B cell (primary cell): ENCODE measurements at regions of chr1 and their contacts with region 1.

Region 1: DNA sequence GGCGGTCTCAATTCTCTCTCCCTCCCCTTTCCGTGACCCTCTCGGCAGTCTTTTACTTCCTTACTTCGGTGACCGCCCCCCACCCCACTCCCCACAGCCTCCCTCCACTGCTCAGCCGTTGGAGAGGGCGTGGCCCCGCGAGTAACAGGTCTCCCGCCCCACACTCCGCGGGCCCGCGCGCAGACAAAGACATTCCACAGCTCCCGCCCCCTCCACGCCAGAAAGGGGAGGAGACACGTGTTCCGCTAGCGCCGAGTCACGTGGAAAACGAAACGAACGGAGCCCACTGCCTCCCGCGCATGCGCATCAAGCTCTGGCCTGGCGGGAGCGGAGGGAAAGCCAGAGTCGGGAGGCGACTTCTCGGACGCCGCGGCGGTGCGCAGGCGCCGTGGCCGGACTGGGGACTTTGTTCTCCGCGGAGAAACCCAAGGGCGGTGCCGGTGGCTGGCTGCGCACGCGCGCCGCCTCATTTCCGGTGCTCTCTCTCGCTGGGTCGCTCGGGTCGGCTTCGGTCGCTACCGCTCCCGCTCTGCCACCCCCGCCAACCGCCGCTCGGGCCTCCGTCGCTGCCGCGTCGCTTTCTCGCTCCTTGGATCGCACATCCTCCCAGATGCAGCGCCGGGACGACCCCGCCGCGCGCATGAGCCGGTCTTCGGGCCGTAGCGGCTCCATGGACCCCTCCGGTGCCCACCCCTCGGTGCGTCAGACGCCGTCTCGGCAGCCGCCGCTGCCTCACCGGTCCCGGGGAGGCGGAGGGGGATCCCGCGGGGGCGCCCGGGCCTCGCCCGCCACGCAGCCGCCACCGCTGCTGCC is at the start of gene KHDRBS1:
- DNase-seq: peak; percentile 99
- ATAC-seq: peak; percentile 86
- H3K4me3 ChIP-seq: peak within 1 kb of the TSS; percentile 60 to 96 (median 85)
- H3K4me3 Mint-ChIP-seq: peak within 1 kb of the TSS; percentile 99
- H3K27ac ChIP-seq: peak within 1 kb of the TSS; percentile 89 to 96
- H3K27ac Mint-ChIP-seq: peak within 1 kb of the TSS; percentile 99
- H3K4me1 ChIP-seq: peaks cover 20 to 33% of the 10 kb centered on the region in 2 donors
- H3K4me1 Mint-ChIP-seq: peaks cover 31% of the 10 kb centered on the region
- H3K27me3 ChIP-seq: no peaks in the 10 kb centered on the region
- H3K27me3 Mint-ChIP-seq: no peaks in the 10 kb centered on the region
- CTCF ChIP-seq: no peak
- total RNA-seq, gene KHDRBS1: 99.0 and 101 TPM in 2 replicates

Region 2: DNA sequence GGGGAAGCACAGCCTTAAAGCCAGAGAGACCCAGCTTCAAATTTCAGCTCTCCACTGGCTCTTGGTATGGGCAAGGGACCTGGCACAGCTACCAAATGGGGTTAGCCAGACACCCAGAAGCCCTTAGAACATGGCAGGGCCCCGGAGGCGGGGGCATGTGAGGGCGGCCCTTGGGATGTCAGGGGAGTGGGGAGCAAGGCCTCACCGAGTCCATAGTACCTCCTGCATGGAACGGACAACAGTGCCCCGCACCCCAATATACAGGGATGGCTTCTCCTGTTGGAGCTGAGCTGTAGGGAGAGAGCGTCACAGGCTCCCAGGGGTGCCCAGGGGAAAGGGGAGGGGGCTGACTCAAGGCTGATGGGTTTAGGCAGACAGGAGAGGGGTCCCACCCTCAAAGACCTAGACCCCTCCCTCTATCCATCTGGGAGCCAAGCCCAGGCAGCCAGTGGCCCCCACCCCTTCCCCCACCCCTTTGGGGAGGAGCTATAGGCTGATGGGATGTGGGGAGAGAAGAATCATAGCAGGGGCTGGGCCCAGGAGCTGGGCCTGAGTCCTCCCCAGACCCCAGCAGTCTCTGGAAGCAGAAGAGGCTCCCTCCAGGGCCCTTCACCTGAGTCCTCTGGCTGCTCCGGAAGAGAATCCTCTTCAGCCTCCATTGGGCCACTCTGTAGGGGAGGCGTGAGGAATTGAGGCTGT is 214.2 kb before region 1 on chr1:
- CTCF ChIA-PET with region 1: no interaction called
- POLR2A ChIA-PET with region 1: interaction called, 12 read pairs
- intact Hi-C with region 1: no loop called
- DNase-seq: no peak
- ATAC-seq: no peak
- H3K4me3 ChIP-seq: no peak overlapping the region
- H3K4me3 Mint-ChIP-seq: no peak overlapping the region
- H3K27ac ChIP-seq: no peak overlapping the region
- H3K27ac Mint-ChIP-seq: no peak overlapping the region
- H3K4me1 ChIP-seq: peaks cover 9% of the 10 kb centered on the region in 2 donors
- H3K4me1 Mint-ChIP-seq: peaks cover 14% of the 10 kb centered on the region
- H3K27me3 ChIP-seq: peaks cover 0 to 13% (median 3%) of the 10 kb centered on the region in 4 experiments
- H3K27me3 Mint-ChIP-seq: peaks cover 23% of the 10 kb centered on the region
- CTCF ChIP-seq: no peak

Region 3: GRCh38 chr1:31938174-31938950 is 75.2 kb before region 1 on chr1 and contains the start of gene PTP4A2:
- CTCF ChIA-PET with region 1: no interaction called
- POLR2A ChIA-PET with region 1: interaction called, 3 read pairs
- intact Hi-C with region 1: loop called (anchors 1 kb)
- DNase-seq: peak; percentile 95
- ATAC-seq: peak; percentile 82
- H3K4me3 ChIP-seq: peak within 1 kb of the TSS; percentile 59 to 97 (median 78)
- H3K4me3 Mint-ChIP-seq: peak within 1 kb of the TSS; percentile 91
- H3K27ac ChIP-seq: peak within 1 kb of the TSS; percentile 78 to 86
- H3K27ac Mint-ChIP-seq: peak within 1 kb of the TSS; percentile 95
- H3K4me1 ChIP-seq: peaks cover 73 to 76% of the 10 kb centered on the region in 2 donors
- H3K4me1 Mint-ChIP-seq: peaks cover 67% of the 10 kb centered on the region
- H3K27me3 ChIP-seq: no peaks in the 10 kb centered on the region
- H3K27me3 Mint-ChIP-seq: no peaks in the 10 kb centered on the region
- CTCF ChIP-seq: peak; percentile 63
- total RNA-seq, gene PTP4A2: 184 and 193 TPM in 2 replicates

Region 4: DNA sequence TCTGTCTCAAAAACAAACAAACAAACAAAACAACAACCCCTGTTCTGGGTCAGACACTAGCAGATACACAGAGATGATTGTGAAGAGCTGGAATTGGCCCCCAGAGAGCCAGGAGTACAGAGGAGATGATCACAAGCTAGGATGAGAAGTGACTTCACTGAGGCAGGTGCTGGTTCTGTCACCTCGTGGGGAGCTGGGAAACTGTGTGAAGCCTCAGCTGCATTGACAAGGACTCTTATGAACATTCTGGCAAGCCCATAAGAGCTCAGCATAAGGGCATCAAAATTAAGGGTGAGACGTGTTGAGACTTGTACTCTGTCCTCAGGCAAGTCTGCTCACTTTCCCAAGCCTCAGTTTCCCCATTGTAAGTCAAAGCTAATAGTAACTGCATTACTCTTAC is 60.8 kb before region 1 on chr1:
- CTCF ChIA-PET with region 1: no interaction called
- POLR2A ChIA-PET with region 1: no interaction called
- intact Hi-C with region 1: no loop called
- DNase-seq: no peak
- ATAC-seq: no peak
- H3K4me3 ChIP-seq: no peak overlapping the region
- H3K4me3 Mint-ChIP-seq: no peak overlapping the region
- H3K27ac ChIP-seq: no peak overlapping the region
- H3K27ac Mint-ChIP-seq: no peak overlapping the region
- H3K4me1 ChIP-seq: peaks cover 20 to 28% of the 10 kb centered on the region in 2 donors
- H3K4me1 Mint-ChIP-seq: peaks cover 23% of the 10 kb centered on the region
- H3K27me3 ChIP-seq: no peaks in the 10 kb centered on the region
- H3K27me3 Mint-ChIP-seq: no peaks in the 10 kb centered on the region
- CTCF ChIP-seq: no peak

Region 5: DNA sequence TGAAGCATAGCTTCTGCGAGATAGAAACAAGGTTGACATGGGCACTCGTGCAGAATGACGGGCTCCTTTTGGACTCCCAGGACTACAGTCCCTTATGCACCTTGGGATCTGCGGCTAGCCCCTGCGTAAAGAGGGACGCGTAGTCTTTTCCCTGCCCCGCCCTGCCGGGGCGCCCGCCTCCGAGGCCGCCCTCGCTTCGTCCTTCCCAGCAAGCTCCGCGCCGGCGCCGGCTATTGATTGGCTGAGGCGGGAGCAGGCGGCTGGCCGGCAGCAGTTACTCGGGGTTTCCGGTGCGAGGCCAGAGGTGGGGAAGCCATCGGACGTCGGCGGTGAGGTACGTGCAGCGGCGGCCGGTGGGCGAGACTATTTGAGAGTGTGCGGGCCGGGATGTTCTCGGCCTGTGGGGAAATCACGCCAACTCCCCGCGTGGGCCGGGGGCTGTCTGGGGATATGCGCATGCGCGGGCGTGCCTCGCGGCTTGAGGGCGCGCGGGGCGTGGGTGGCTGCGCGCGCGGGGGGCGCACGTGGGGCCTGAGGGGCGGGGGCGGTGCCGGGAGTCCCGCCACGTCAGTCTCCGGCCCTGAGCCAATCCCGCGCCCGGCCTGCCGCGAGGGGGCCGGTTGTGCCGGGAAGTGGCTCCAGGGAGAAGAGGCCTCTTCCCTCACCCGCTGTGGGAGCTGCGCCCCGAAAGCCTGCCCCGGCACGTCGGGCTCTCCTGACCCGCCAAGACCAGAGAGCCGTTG is 166.0 kb after region 1 on chr1 and contains the start of gene TXLNA:
- CTCF ChIA-PET with region 1: no interaction called
- POLR2A ChIA-PET with region 1: no interaction called
- intact Hi-C with region 1: loop called (anchors 1 kb)
- DNase-seq: peak; percentile 94
- ATAC-seq: peak; percentile 90
- H3K4me3 ChIP-seq: peak within 1 kb of the TSS; percentile 71 to 92 (median 76)
- H3K4me3 Mint-ChIP-seq: peak within 1 kb of the TSS; percentile 96
- H3K27ac ChIP-seq: peak within 1 kb of the TSS; percentile 76 to 90
- H3K27ac Mint-ChIP-seq: peak within 1 kb of the TSS; percentile 99
- H3K4me1 ChIP-seq: peaks cover 21 to 31% of the 10 kb centered on the region in 2 donors
- H3K4me1 Mint-ChIP-seq: peaks cover 35% of the 10 kb centered on the region
- H3K27me3 ChIP-seq: no peaks in the 10 kb centered on the region
- H3K27me3 Mint-ChIP-seq: no peaks in the 10 kb centered on the region
- CTCF ChIP-seq: no peak
- total RNA-seq, gene TXLNA: 38.3 and 38.4 TPM in 2 replicates

Region 6: DNA sequence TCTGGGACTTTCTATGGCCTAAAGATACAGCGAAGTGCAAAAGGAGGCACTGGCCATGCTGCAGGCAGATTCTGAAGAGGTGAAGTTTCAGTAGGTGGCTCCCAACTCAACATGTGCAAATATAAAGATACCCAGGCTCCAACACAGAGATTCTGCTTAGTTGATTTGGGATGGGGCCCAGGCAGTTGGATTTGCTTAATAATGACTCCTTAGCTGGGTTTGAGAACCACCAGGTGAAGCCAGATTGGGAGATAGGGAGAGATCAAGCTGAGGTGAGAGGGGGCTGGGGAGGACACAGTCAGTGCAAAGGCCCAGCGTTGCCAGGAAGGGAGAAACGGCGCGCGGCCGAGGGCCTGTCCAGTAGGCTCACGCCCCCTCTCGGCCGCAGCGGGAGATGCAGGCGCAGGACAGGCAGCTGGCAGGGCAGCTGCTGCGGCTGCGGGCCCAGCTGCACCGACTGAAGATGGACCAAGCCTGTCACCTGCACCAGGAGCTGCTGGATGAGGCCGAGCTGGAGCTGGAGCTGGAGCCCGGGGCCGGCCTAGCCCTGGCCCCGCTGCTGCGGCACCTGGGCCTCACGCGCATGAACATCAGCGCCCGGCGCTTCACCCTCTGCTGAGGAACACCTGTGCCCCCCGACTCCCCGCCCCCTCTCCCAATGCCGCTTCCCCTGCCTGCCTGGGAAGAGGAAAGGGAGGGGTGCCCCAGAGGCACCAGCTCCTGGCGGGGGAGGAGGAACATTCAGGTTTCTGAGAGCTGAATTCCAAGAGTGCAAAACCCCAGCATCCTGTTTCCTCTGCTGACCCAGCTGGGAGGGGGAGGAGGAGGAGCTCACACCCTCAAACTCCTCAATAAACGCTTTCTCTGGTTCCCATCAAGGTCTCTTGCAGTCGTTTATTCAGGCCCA is 234.6 kb after region 1 on chr1:
- CTCF ChIA-PET with region 1: no interaction called
- POLR2A ChIA-PET with region 1: no interaction called
- intact Hi-C with region 1: no loop called
- DNase-seq: peak; percentile 77
- ATAC-seq: peak; percentile 11
- H3K4me3 ChIP-seq: peak overlapping the region in 3 of 5 experiments; percentile 7 to 56 (median 29)
- H3K4me3 Mint-ChIP-seq: peak overlapping the region; percentile 68
- H3K27ac ChIP-seq: peak overlapping the region; percentile 94 to 95
- H3K27ac Mint-ChIP-seq: peak overlapping the region; percentile 84
- H3K4me1 ChIP-seq: peaks cover 72 to 73% of the 10 kb centered on the region in 2 donors
- H3K4me1 Mint-ChIP-seq: peaks cover 64% of the 10 kb centered on the region
- H3K27me3 ChIP-seq: no peaks in the 10 kb centered on the region
- H3K27me3 Mint-ChIP-seq: no peaks in the 10 kb centered on the region
- CTCF ChIP-seq: peak; percentile 90

Region 7: DNA sequence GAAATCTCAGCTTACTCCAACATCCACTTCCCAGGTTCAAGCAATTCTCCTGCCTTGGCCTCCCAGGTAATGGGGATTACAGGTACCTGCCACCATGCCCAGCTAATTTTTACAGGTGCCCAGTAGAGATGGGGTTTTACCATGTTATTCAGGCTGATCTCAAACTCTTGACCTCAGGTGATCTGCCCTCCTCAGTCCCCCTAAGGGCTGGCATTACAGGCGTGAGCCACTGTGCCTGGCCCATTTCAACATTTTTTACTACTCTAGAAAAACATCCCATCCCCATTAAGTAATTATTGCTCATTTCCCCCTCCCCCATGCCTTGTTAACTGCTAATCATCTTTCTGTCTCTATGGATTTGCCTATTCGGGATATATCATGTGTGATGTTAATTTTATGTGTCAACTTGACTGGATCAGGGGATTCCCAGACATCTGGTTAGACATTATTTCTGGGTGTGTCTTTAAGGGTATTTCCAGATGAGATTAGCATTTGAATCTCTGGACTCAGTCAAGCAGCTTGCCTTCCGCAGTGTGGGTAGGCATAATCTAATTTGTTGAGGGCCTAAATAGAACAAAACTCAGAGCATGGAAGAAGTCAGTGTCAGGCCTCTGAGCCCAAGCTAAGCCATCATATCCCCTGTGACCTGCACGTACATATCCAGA is 418.3 kb after region 1 on chr1:
- CTCF ChIA-PET with region 1: no interaction called
- POLR2A ChIA-PET with region 1: no interaction called
- intact Hi-C with region 1: no loop called
- DNase-seq: peak; percentile 74
- ATAC-seq: peak; percentile 85
- H3K4me3 ChIP-seq: no peak overlapping the region
- H3K4me3 Mint-ChIP-seq: peak overlapping the region; percentile 55
- H3K27ac ChIP-seq: peak overlapping the region; percentile 10 to 46
- H3K27ac Mint-ChIP-seq: peak overlapping the region; percentile 69
- H3K4me1 ChIP-seq: peaks cover 20 to 21% of the 10 kb centered on the region in 2 donors
- H3K4me1 Mint-ChIP-seq: peaks cover 37% of the 10 kb centered on the region
- H3K27me3 ChIP-seq: peaks cover 0 to 14% (median 3%) of the 10 kb centered on the region in 4 experiments
- H3K27me3 Mint-ChIP-seq: peaks cover 13% of the 10 kb centered on the region
- CTCF ChIP-seq: no peak

Region 8: DNA sequence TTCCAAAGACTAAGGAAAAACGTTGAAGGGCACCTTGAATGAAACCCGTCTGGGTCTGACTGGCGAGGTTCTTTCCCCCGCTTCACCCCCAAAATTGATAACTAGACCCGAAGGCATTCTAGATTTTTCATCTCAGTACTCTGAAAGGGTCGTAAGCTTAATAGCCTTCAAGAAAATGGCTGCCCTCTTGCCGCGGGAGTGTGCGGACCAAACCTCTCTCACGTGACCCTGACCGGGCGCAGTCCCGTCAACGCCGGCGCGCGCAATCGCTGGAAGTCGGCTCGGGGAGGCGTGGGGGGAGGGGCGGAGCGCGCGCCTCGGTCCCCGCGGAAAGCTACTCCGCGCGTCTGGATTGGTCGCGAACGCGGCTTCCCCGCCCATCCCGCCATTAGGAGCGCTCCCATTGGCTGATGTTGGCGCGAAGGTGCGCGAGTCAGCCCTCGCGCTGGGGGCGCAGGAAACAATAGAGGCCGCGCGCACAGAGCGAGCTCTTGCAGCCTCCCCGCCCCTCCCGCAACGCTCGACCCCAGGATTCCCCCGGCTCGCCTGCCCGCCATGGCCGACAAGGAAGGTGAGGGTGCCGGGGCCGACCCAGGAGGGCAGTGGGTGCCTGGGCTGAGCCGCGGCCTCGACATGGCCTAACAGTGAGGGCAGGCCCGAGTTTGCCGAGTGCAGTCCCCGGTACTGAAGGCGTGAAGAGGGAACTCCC is 637.3 kb after region 1 on chr1 and contains the start of gene RBBP4:
- CTCF ChIA-PET with region 1: no interaction called
- POLR2A ChIA-PET with region 1: interaction called, 4 read pairs
- intact Hi-C with region 1: loop called (anchors 5 kb)
- DNase-seq: peak; percentile 99
- ATAC-seq: peak; percentile 83
- H3K4me3 ChIP-seq: peak within 1 kb of the TSS; percentile 77 to 96 (median 81)
- H3K4me3 Mint-ChIP-seq: peak within 1 kb of the TSS; percentile 98
- H3K27ac ChIP-seq: peak within 1 kb of the TSS; percentile 97 to 100
- H3K27ac Mint-ChIP-seq: peak within 1 kb of the TSS; percentile 100
- H3K4me1 ChIP-seq: peaks cover 21 to 31% of the 10 kb centered on the region in 2 donors
- H3K4me1 Mint-ChIP-seq: peaks cover 55% of the 10 kb centered on the region
- H3K27me3 ChIP-seq: no peaks in the 10 kb centered on the region
- H3K27me3 Mint-ChIP-seq: no peaks in the 10 kb centered on the region
- CTCF ChIP-seq: no peak
- total RNA-seq, gene RBBP4: 192 and 204 TPM in 2 replicates